ENCODE measurements at regions of chr10 and their contacts with region 1.

Region 1: GRCh38 chr10:4671451-4672145 is 154.4 kb upstream of the AKR1E2 start:
- DNase-seq: peak; percentile 72
- H3K4me3 Mint-ChIP-seq: peak overlapping the region; percentile 56
- H3K27ac Mint-ChIP-seq: peak overlapping the region; percentile 90
- H3K4me1 Mint-ChIP-seq: peaks cover 27% of the 10 kb centered on the region
- H3K27me3 Mint-ChIP-seq: no peaks in the 10 kb centered on the region
- CTCF ChIP-seq: no peak

Region 2: GRCh38 chr10:4686644-4686996 is 15.0 kb after region 1 on chr10:
- CTCF ChIA-PET with region 1: no interaction called
- POLR2A ChIA-PET with region 1: interaction called, 33 read pairs
- intact Hi-C with region 1: no loop called
- DNase-seq: peak; percentile 64
- H3K4me3 Mint-ChIP-seq: no peak overlapping the region
- H3K27ac Mint-ChIP-seq: peak overlapping the region; percentile 77
- H3K4me1 Mint-ChIP-seq: peaks cover 51% of the 10 kb centered on the region
- H3K27me3 Mint-ChIP-seq: no peaks in the 10 kb centered on the region
- CTCF ChIP-seq: no peak

Region 3: GRCh38 chr10:4725917-4726606 is 54.5 kb after region 1 on chr10:
- CTCF ChIA-PET with region 1: no interaction called
- POLR2A ChIA-PET with region 1: interaction called, 17 read pairs
- intact Hi-C with region 1: loop called (anchors 5 kb)
- DNase-seq: peak; percentile 65
- H3K4me3 Mint-ChIP-seq: no peak overlapping the region
- H3K27ac Mint-ChIP-seq: peak overlapping the region; percentile 91
- H3K4me1 Mint-ChIP-seq: peaks cover 12% of the 10 kb centered on the region
- H3K27me3 Mint-ChIP-seq: no peaks in the 10 kb centered on the region
- CTCF ChIP-seq: no peak